ENCODE measurements at regions of chr6 and their contacts with region 1.

Region 1: GRCh38 chr6:10316327-10316726 is 98.5 kb downstream of the TFAP2A start:
- DNase-seq: peak; percentile 67
- H3K4me3 Mint-ChIP-seq: peak overlapping the region; percentile 44
- H3K27ac Mint-ChIP-seq: no peak overlapping the region
- H3K4me1 Mint-ChIP-seq: peaks cover 16% of the 10 kb centered on the region
- H3K27me3 Mint-ChIP-seq: no peaks in the 10 kb centered on the region
- CTCF ChIP-seq: no peak

Region 2: DNA sequence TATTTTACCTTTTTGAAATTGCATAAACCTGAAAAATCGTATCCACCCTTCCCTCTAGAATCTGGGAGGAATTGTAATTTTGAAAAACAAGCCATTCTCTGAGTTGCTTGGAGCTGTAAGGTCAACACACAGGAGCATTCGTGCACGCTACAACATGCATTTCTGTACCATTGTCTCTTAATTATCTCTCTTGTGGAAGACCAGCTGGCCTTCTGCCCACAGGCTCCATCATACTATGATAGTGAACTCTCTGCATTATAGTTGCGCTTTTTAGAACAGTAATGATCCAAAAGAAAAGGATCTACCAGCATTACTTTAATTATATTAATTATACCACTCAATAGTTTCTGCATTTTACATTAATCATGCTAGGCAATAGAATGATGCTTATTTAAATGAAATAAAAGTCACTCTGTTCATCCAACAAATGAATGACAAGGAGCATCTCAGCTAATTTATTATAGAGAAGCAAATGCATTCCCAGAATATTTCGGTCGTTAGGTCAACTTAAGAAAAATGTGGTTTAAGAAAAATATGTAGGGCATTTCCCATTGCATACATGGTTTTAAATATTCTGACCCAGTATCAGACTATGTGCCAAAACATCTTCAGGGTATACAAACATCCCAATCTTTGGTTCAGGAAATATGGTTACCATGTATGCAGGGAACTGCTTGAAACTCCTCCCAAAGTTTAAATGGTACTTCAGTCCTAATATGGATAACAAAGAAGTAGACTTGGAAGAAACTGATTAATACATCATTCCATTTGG is 165.0 kb before region 1 on chr6:
- CTCF ChIA-PET with region 1: no interaction called
- intact Hi-C with region 1: no loop called
- DNase-seq: no peak
- H3K4me3 Mint-ChIP-seq: no peak overlapping the region
- H3K27ac Mint-ChIP-seq: no peak overlapping the region
- H3K4me1 Mint-ChIP-seq: no peaks in the 10 kb centered on the region
- H3K27me3 Mint-ChIP-seq: no peaks in the 10 kb centered on the region
- CTCF ChIP-seq: no peak

Region 3: GRCh38 chr6:10369881-10370280 is 53.6 kb after region 1 on chr6:
- CTCF ChIA-PET with region 1: no interaction called
- intact Hi-C with region 1: loop called (anchors 10 kb)
- DNase-seq: no peak
- H3K4me3 Mint-ChIP-seq: no peak overlapping the region
- H3K27ac Mint-ChIP-seq: no peak overlapping the region
- H3K4me1 Mint-ChIP-seq: peaks cover 17% of the 10 kb centered on the region
- H3K27me3 Mint-ChIP-seq: no peaks in the 10 kb centered on the region
- CTCF ChIP-seq: no peak

Region 4: GRCh38 chr6:10384617-10385523 is 68.5 kb after region 1 on chr6:
- CTCF ChIA-PET with region 1: no interaction called
- intact Hi-C with region 1: no loop called
- DNase-seq: no peak
- H3K4me3 Mint-ChIP-seq: peak overlapping the region; percentile 68
- H3K27ac Mint-ChIP-seq: peak overlapping the region; percentile 9
- H3K4me1 Mint-ChIP-seq: peaks cover 7% of the 10 kb centered on the region
- H3K27me3 Mint-ChIP-seq: no peaks in the 10 kb centered on the region
- CTCF ChIP-seq: no peak

Region 5: DNA sequence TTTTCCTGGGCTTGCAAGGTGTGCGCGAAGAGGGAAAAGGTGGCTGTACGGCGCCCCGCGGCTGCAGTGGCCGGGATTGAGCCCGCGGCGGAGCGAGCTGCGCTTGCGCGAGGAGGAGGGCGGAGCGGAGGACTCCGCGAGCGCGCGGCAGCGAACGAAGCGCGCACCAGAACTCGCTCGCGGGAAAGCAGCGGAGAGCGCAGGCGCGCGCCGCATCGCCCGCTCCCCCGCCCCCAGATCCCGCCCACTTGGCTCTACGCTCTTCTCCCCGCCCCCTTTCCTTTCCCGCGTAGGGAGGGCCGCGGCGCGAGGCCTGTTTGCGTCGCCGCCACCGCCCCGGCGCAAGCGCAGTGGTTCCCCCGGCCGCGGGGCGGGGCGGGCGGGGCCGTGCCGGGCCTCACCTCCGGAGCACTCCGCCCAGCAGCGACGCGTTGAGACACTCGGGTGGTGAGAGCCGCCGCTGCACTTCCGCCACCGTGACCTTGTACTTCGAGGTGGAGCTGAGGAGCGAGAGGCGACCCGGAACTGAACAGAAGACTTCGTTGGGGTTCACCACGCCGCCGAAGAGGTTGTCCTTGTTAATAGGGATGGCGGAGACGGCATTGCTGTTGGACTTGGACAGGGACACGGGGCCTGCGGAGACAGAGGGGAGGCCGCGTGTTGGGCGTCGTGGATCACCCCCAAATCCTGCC is 87.9 kb after region 1 on chr6:
- CTCF ChIA-PET with region 1: no interaction called
- intact Hi-C with region 1: loop called (anchors 10 kb)
- DNase-seq: peak; percentile 93
- H3K4me3 Mint-ChIP-seq: peak overlapping the region; percentile 92
- H3K27ac Mint-ChIP-seq: peak overlapping the region; percentile 93
- H3K4me1 Mint-ChIP-seq: peaks cover 28% of the 10 kb centered on the region
- H3K27me3 Mint-ChIP-seq: no peaks in the 10 kb centered on the region
- CTCF ChIP-seq: no peak

Measured in Calu3 (cell line).